WTC11 (cell line): ENCODE measurements at regions of chr20 and their contacts with region 1.

Region 1: GRCh38 chr20:63537525-63538203 is 488 bp upstream of the PTK6 start:
- DNase-seq: peak; percentile 87
- ATAC-seq: peak; percentile 84
- H3K4me3 Mint-ChIP-seq: peak overlapping the region; percentile 49
- H3K27ac Mint-ChIP-seq: no peak overlapping the region
- H3K4me1 Mint-ChIP-seq: 0 out of 2 replicates have a peak, but pooled peaks cover 2% of the 10 kb centered on the region
- H3K27me3 Mint-ChIP-seq: no peaks in the 10 kb centered on the region
- CTCF ChIP-seq: peak; percentile 93

Region 2: GRCh38 chr20:63495741-63496595 is 41.7 kb before region 1 on chr20:
- CTCF ChIA-PET with region 1: interaction called, 37 read pairs
- POLR2A ChIA-PET with region 1: no interaction called
- DNase-seq: peak; percentile 87
- ATAC-seq: peak; percentile 61
- H3K4me3 Mint-ChIP-seq: peak overlapping the region; percentile 52
- H3K27ac Mint-ChIP-seq: no peak overlapping the region
- H3K4me1 Mint-ChIP-seq: peaks cover 7% of the 10 kb centered on the region
- H3K27me3 Mint-ChIP-seq: peaks cover 38% of the 10 kb centered on the region
- CTCF ChIP-seq: peak; percentile 97

Region 3: GRCh38 chr20:63574156-63574828 is 36.6 kb after region 1 on chr20 and contains the start of gene HELZ2:
- CTCF ChIA-PET with region 1: interaction called, 52 read pairs
- POLR2A ChIA-PET with region 1: no interaction called
- DNase-seq: peak; percentile 66
- ATAC-seq: peak; percentile 67
- H3K4me3 Mint-ChIP-seq: peak within 1 kb of the TSS; percentile 78
- H3K27ac Mint-ChIP-seq: peak within 1 kb of the TSS; percentile 72; the same call in 1 of the 2 replicates
- H3K4me1 Mint-ChIP-seq: no peaks in the 10 kb centered on the region
- H3K27me3 Mint-ChIP-seq: no peaks in the 10 kb centered on the region
- CTCF ChIP-seq: no peak
- total RNA-seq, gene HELZ2: 27.5 to 32.6 TPM (median 32.4 TPM) in 3 replicates

Region 4: DNA sequence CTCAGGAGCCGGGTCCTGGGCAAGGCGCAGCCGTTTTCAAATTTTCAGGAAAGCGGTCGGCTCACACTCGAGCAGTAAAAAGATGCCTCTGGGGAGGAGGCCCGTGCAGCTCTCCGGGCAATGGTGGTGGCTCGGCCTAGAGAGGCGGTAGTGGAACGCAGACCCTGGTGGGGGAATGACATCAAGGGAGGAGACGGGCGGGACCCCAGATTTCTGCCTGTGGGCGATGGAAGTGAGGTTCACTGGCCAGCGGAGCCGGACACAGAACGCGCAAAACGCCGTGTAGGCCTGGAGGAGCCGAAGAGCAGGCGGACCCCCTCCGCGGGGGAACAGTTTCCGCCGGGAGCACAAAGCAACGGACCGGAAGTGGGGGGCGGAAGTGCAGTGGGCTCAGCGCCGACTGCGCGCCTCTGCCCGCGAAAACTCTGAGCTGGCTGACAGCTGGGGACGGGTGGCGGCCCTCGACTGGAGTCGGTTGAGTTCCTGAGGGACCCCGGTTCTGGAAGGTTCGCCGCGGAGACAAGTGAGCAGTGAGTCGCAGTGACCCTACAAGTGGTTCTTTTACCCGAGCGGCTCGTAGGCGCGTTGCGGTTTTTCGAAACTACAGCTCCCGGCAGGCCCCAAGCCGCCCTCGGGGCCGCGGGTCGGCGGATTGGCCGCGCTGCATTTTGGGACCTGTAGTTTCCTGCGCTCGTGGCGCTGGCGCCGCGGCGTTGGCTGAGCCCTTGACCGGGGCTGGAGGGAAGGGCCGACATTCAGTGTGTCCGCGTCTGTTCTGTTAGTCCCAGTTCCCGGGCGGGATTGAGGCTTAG is 120.5 kb after region 1 on chr20 and contains the start of gene RTEL1:
- CTCF ChIA-PET with region 1: interaction called, 17 read pairs
- POLR2A ChIA-PET with region 1: no interaction called
- DNase-seq: peak; percentile 92
- ATAC-seq: peak; percentile 83
- H3K4me3 Mint-ChIP-seq: peak within 1 kb of the TSS; percentile 89
- H3K27ac Mint-ChIP-seq: peak within 1 kb of the TSS; percentile 87
- H3K4me1 Mint-ChIP-seq: peaks cover 23% of the 10 kb centered on the region
- H3K27me3 Mint-ChIP-seq: no peaks in the 10 kb centered on the region
- CTCF ChIP-seq: no peak
- total RNA-seq, gene RTEL1: 39.3 to 44.9 TPM (median 40.5 TPM) in 3 replicates

Region 5: GRCh38 chr20:63689046-63690000 is 151.7 kb after region 1 on chr20:
- CTCF ChIA-PET with region 1: no interaction called
- POLR2A ChIA-PET with region 1: no interaction called
- DNase-seq: no peak
- ATAC-seq: no peak
- H3K4me3 Mint-ChIP-seq: no peak overlapping the region
- H3K27ac Mint-ChIP-seq: no peak overlapping the region
- H3K4me1 Mint-ChIP-seq: no peaks in the 10 kb centered on the region
- H3K27me3 Mint-ChIP-seq: peaks cover 3% of the 10 kb centered on the region; the same call in 1 of the 2 replicates
- CTCF ChIP-seq: no peak

Region 6: DNA sequence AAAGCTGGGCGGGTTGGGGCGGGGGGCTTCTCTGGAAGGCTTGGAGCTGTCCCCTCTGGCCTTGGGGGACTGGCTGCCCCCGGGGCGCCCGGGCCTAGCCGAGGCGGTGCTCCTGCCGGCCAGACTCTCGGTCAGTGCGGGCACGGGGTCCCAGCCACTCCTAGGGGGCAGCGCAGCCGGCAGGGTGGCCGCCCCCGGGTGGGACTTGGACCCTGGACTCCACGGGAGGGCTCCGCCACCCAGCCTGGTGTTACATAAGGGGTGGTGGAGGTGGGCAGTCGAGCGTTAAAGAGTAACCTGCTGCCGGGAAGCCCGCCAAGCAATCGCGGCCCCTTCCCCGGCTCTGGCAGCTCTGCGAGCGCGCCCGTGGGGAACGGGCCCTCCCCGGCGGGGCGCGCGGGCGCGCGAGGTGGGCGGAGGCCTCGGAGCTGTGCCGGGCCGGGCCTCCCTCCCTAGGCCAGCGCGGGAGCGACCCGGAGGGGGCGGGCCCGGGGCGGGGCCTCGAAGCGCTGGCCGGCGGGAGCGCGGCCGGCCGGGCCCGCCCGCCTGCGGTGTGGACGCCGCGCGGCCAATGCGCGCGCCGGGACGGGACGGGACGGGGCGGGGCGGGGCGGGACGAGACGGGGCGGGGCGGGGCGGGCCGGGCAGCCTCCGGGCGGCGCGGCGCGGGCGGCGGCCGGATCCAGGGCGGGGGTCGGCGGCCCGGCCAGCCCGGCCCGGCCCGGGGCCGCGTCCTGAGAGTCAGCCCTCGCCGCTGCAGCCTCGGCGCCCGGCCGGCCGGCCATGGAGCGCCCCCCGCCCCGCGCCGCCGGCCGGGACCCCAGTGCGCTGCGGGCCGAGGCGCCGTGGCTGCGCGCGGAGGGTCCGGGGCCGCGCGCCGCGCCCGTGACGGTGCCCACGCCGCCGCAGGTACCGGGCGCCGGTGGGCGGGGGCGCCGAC is 201.7 kb after region 1 on chr20 and contains the start of gene SLC2A4RG:
- CTCF ChIA-PET with region 1: interaction called, 11 read pairs
- POLR2A ChIA-PET with region 1: no interaction called
- DNase-seq: peak; percentile 58
- ATAC-seq: peak; percentile 61
- H3K4me3 Mint-ChIP-seq: peak within 1 kb of the TSS; percentile 60
- H3K27ac Mint-ChIP-seq: no peak within 1 kb of the TSS
- H3K4me1 Mint-ChIP-seq: no peaks in the 10 kb centered on the region
- H3K27me3 Mint-ChIP-seq: no peaks in the 10 kb centered on the region
- CTCF ChIP-seq: no peak
- total RNA-seq, gene SLC2A4RG: 41.6 to 47.2 TPM (median 43.3 TPM) in 3 replicates

Region 7: DNA sequence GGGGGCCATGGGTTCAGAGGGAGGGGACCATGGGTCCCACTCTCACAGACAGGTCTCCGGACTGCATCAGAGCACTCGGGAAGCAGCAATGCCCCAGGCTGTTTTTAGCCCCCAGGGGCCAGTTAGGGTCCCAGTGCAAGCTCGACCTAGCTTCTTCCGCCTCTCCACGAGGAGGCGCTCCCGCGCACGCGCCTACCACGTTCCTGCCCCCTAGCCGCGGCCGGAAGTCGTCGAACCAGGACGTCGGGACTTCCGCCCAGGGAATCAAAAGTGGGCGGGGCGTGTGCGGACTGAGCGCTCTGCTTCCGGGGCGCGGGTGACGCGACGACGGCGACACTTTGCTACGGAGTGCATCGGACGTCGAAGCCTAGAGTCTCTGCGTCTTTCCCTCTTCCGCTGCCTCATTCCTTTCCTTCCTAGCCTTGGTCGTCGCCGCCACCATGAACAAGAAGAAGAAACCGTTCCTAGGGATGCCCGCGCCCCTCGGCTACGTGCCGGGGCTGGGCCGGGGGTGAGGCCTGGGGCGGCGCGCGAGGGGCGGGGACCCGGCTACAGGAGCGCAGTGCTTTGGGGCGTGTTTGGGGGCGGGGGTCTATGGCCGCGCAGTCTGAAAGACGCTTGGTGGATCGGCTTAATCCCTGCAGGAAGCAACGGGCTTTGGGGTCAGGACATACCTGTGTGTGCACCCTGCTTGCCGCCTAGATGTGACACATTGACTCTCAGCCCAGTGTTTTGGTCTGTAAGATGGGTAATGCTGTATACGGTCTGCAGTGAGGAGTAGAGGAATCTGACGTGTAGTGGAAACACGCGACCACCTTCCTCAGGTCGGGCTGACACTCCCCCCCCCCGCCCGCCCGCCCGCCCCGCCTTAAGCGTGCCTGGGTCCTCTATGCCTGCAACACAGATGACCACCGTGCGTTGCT is 443.4 kb after region 1 on chr20 and contains the start of gene PRPF6:
- CTCF ChIA-PET with region 1: interaction called, 12 read pairs
- POLR2A ChIA-PET with region 1: no interaction called
- DNase-seq: peak; percentile 98
- ATAC-seq: peak; percentile 71
- H3K4me3 Mint-ChIP-seq: peak within 1 kb of the TSS; percentile 94
- H3K27ac Mint-ChIP-seq: peak within 1 kb of the TSS; percentile 93
- H3K4me1 Mint-ChIP-seq: peaks cover 21% of the 10 kb centered on the region
- H3K27me3 Mint-ChIP-seq: peaks cover 10% of the 10 kb centered on the region
- CTCF ChIP-seq: peak; percentile 60
- total RNA-seq, gene PRPF6: 79.4 to 84.6 TPM (median 80.5 TPM) in 3 replicates